ENCODE measurements at regions of chr22 and their contacts with region 1.

Region 1: GRCh38 chr22:50148991-50149721 is 21.4 kb upstream of the PANX2 start:
- DNase-seq: peak; percentile 61
- H3K4me3 ChIP-seq: no peak overlapping the region
- H3K27ac ChIP-seq: no peak overlapping the region
- H3K4me1 ChIP-seq: no peaks in the 10 kb centered on the region
- H3K27me3 ChIP-seq: no peaks in the 10 kb centered on the region
- CTCF ChIP-seq: peak; percentile 77

Region 2: DNA sequence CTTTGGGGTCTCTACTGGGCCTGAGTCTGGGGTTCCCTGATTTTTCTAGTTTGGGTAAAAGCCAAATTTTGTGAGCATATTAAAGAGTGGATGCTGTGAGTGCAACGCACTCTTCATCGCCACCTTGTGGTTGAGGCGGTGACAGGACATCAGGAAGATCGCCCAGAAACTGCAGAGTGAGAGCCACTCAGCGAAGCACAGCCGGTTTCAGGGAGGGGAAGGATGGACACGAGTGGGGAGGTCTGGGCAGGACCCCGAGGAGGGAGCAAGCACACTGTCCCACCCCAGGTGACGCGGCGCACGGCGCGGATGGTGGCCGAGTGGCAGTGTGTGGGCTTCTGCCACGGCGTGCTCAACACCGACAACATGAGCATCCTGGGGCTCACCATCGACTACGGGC is 60.7 kb after region 1 on chr22:
- intact Hi-C with region 1: loop called (anchors 2 kb)
- DNase-seq: peak; percentile 70
- H3K4me3 ChIP-seq: no peak overlapping the region
- H3K27ac ChIP-seq: no peak overlapping the region
- H3K4me1 ChIP-seq: no peaks in the 10 kb centered on the region
- H3K27me3 ChIP-seq: no peaks in the 10 kb centered on the region
- CTCF ChIP-seq: peak; percentile 73

Region 3: DNA sequence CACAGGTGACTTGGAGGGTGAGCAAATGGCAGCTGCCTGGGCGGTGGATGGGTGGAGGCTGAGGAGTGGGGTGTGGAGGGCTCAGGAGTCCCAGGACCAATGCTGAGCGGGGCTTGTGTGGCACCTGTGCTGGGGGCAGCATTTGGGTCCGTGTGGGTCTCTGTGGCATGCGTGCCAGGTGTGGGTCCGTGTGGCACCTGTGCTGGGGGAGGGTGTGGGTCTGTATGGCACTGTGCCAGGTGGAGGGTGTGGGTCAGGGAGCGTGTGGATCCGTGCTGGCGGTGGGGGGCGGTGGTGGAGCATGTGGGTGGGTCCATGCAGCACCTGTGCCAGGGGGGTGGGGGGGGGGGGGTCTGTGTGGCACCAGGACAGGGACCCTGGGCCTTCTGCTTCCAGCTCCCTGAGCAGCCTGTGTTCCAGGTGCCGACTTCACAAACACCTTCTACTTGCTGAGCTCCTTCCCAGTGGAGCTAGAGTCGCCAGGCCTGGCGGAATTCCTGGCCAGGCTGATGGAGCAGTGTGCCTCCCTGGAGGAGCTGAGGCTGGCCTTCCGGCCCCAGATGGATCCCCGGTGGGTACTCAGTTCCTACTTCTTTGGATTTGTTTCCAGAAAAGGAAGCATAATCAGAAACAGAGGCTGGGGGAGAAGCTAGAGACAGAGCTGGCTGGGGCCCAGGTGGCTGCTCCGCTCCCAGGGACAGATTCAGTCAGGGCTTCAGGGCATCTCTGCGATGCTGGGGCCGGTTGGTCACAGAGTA is 66.3 kb after region 1 on chr22:
- intact Hi-C with region 1: loop called (anchors 2 kb)
- DNase-seq: no peak
- H3K4me3 ChIP-seq: no peak overlapping the region
- H3K27ac ChIP-seq: no peak overlapping the region
- H3K4me1 ChIP-seq: no peaks in the 10 kb centered on the region
- H3K27me3 ChIP-seq: no peaks in the 10 kb centered on the region
- CTCF ChIP-seq: no peak